Right cardiac atrium (tissue), 5 donors: ENCODE measurements at regions of chr5 and their contacts with region 1.

Region 1: DNA sequence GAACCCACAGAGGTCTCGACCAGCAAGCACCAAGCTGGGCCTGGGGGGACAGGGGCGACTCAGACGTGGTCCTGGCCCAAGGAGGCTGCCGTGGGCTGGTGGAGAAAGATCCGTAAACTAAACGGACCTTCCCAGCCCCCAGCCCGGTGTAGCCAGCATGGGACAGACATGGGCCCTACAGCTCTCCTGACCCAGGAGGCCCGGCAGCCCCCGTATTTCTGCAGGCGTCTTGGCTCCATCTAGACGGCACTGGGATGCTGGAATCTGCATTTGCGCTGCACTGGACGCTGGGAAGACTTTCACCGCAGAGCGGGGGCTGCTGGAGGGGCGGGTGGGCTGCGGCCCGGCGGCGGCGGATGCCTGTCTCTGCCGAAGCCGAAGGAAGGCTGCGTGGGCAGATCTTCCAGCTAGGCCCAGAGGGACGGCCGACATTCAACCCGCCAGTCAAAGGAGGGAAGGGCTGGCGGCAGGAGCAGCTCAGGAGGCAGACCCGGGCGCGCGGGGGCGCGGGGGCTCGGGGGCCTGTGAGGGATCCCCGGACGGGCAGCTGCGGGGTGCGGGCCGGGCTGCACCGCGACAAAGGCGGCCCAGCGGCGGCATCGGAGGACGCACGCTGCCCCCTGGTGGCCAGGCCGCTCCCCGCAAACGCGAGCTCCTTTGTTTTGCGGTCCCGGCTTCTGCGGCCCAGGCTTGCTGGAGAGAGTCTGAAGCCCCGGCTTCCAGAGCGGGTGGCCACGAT is 266.2 kb downstream of the NSG2 start:
- DNase-seq: peak; percentile 73 to 90 (median 88)
- ATAC-seq: peak; percentile 78 to 83
- H3K4me3 ChIP-seq: peak overlapping the region; percentile 41
- H3K27ac ChIP-seq: no peak overlapping the region
- H3K4me1 ChIP-seq: no peaks in the 10 kb centered on the region
- H3K27me3 ChIP-seq: no peaks in the 10 kb centered on the region

Region 2: GRCh38 chr5:173625696-173626504 is 685.8 kb before region 1 on chr5:
- intact Hi-C with region 1: loop called in 2 of 4 experiments (anchors 5 to 10 kb)
- DNase-seq: no peak
- ATAC-seq: peak; percentile 23 to 39
- H3K4me3 ChIP-seq: no peak overlapping the region
- H3K27ac ChIP-seq: no peak overlapping the region
- H3K4me1 ChIP-seq: peaks cover 5% of the 10 kb centered on the region
- H3K27me3 ChIP-seq: no peaks in the 10 kb centered on the region

Region 3: DNA sequence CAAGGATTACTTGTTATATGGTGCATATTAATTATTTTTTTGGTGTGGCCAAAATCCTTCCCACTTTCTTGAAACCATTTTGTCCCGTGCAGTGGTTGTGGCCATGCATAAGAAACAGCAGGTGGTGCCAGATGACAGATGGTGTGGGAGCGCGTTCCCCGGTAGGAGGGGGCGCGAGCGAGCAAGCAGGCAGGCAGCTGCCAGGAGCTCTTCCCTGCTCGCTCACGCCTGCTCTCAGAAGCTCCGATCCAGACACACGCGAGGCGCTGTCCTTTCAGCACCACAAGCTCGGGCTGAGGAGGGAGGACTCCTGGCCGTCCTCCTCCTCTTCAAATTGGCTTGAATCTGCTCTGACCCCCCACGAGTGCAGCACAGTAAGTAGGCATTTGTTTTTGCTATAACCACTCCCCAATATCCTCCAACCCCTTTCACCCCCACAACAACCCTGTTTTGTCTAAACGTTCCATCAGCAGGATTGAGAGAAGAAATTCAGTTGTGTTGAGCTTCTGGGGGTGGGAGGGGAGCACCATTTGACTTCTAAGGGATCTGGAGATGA is 266.2 kb before region 1 on chr5 and contains the start of gene NSG2:
- intact Hi-C with region 1: loop called (anchors 2 to 10 kb)
- DNase-seq: peak; percentile 83 to 92 (median 91)
- ATAC-seq: peak; percentile 97 to 98
- H3K4me3 ChIP-seq: no peak within 1 kb of the TSS
- H3K27ac ChIP-seq: no peak within 1 kb of the TSS
- H3K4me1 ChIP-seq: no peaks in the 10 kb centered on the region
- H3K27me3 ChIP-seq: no peaks in the 10 kb centered on the region
- total RNA-seq, gene NSG2: 0.12 to 0.97 TPM in 2 of 4 donors, not detected in the others

Region 4: DNA sequence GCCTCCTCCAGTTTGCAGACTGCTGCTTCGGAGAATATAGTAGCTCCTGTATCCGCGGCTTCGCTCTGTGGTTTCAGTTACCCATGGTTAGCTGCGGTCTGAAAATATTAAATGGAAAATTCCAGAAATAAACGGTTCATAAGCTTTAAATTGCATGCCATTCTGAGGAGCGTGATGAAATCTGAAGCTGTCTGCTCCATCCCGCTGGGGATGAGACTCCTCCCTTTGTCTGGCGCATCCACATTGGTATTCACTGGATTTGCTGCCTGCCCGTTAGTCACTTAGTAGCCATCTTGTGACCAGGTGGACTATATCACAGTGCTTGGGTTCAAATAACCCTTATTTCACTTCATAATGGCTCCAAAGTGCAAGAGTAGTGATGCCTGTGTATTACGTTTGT is 449.0 kb after region 1 on chr5:
- intact Hi-C with region 1: no loop called
- DNase-seq: no peak
- ATAC-seq: no peak
- H3K4me3 ChIP-seq: no peak overlapping the region
- H3K27ac ChIP-seq: no peak overlapping the region
- H3K4me1 ChIP-seq: no peaks in the 10 kb centered on the region
- H3K27me3 ChIP-seq: no peaks in the 10 kb centered on the region